Activated CD4-positive, alpha-beta T cell treated with anti-CD3 and anti-CD28 coated beads for 36 hours (primary cell): ENCODE measurements at regions of chr3 and their contacts with region 1.

Region 1: DNA sequence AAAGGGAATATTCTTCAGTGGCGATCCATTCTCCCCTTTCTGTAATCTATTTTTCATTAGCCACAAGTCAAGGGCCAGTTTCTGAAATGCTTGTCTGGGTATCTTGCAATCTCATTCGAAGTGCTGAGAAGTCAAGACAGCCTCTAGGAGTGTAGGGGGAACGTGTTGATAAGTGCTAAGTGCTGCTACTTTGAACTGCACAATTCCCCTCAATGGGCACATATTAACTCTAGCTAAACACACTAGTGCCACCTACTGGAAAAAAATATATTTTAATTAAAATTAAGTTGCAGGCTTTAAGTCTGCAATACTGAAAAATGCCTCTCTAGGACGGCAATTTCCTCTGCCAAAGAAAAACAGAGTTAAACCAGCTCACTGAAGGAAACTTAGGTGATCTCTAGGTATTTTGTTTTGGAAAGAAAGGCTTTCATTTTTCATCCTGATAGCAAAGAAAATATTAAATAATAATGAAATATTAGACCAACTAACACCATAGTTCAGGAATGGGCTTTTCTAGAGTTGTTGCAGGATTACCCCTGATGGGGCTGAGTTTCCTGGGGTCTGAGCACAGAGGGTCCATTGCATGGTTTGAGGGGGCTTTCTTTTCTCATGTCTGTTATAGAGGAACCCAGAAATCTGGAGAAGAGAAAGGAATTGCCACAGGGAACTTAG is 181.9 kb upstream of the KBTBD8 start:
- DNase-seq: no peak
- ATAC-seq: peak; percentile 74
- H3K4me3 Mint-ChIP-seq: no peak overlapping the region
- H3K27ac Mint-ChIP-seq: no peak overlapping the region
- H3K4me1 Mint-ChIP-seq: no peaks in the 10 kb centered on the region
- H3K27me3 Mint-ChIP-seq: peaks cover 7% of the 10 kb centered on the region

Region 2: GRCh38 chr3:65785065-65785645 is 1031.1 kb before region 1 on chr3:
- CTCF ChIA-PET with region 1: no interaction called
- POLR2A ChIA-PET with region 1: no interaction called
- intact Hi-C with region 1: loop called in 1 of 2 experiments (anchors 10 kb)
- DNase-seq: no peak
- ATAC-seq: no peak
- H3K4me3 Mint-ChIP-seq: no peak overlapping the region
- H3K27ac Mint-ChIP-seq: no peak overlapping the region
- H3K4me1 Mint-ChIP-seq: no peaks in the 10 kb centered on the region
- H3K27me3 Mint-ChIP-seq: no peaks in the 10 kb centered on the region

Region 3: DNA sequence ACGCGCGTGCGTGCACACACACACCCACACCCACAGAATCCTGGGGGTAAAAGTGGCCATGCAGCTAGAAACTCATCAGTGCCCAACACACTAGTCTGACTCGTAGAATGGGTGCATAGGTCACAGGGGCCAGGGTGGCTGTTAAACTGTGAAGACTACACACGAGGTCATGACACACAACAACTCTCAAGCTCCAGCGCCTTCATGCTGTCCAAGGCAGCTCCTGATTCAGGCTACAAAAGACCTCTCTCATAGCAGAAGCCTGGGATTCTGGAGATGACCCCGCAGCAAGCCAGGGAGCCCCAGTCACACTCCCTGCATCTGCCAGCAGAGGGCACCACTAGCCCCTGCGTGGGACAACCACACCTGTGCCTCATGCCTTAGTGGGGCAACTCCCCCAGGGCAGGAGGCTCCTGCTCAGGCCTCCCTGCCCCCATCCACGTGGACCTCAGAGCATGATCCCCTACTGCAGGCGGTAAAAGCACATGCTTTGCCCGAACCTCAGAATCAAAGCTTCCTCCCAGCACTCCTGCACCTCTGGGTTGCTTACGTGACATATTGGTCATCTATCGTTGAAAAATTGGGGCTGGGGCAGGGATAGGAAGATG is 408.5 kb before region 1 on chr3:
- CTCF ChIA-PET with region 1: interaction called, 15 read pairs
- POLR2A ChIA-PET with region 1: no interaction called
- intact Hi-C with region 1: loop called (anchors 1 kb)
- DNase-seq: peak; percentile 85
- ATAC-seq: peak; percentile 97
- H3K4me3 Mint-ChIP-seq: no peak overlapping the region
- H3K27ac Mint-ChIP-seq: no peak overlapping the region
- H3K4me1 Mint-ChIP-seq: no peaks in the 10 kb centered on the region
- H3K27me3 Mint-ChIP-seq: no peaks in the 10 kb centered on the region

Region 4: GRCh38 chr3:66803206-66803605 is 13.0 kb before region 1 on chr3:
- CTCF ChIA-PET with region 1: interaction called, 26 read pairs
- POLR2A ChIA-PET with region 1: no interaction called
- intact Hi-C with region 1: no loop called
- DNase-seq: no peak
- ATAC-seq: peak; percentile 33
- H3K4me3 Mint-ChIP-seq: no peak overlapping the region
- H3K27ac Mint-ChIP-seq: no peak overlapping the region
- H3K4me1 Mint-ChIP-seq: peaks cover 5% of the 10 kb centered on the region
- H3K27me3 Mint-ChIP-seq: peaks cover 16% of the 10 kb centered on the region